ENCODE measurements at regions of chr11 and their contacts with region 1.

Region 1: DNA sequence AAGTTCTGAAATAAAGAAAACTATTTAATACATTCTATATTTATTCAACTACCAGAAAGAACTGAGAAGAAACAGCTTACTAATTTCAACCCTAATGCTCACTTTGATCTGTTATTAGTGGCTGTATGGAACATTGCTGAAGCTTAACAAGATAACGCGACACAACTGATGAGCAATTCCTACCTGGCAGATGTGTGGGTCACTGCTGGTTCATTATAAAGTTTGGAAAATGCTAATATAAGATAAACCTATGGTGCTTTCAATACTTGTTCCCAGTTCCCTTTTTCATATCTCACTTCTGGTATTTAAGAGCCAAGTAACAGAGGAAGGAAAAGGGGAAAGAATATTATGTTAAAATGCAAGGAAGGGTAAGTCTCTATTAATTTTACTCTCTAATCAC is 10.5 kb downstream of the CTSC start:
- DNase-seq: no peak
- ATAC-seq: no peak
- H3K4me3 Mint-ChIP-seq: no peak overlapping the region
- H3K27ac Mint-ChIP-seq: peak overlapping the region in 1 of 10 donors; percentile 29
- H3K4me1 Mint-ChIP-seq: peaks cover 24 to 98% (median 85%) of the 10 kb centered on the region in 4 donors
- H3K27me3 Mint-ChIP-seq: no peaks in the 10 kb centered on the region

Region 2: GRCh38 chr11:88042238-88042637 is 284.8 kb before region 1 on chr11:
- POLR2A ChIA-PET with region 1: no interaction called
- DNase-seq: no peak
- ATAC-seq: no peak
- H3K4me3 Mint-ChIP-seq: no peak overlapping the region
- H3K27ac Mint-ChIP-seq: no peak overlapping the region
- H3K4me1 Mint-ChIP-seq: no peaks in the 10 kb centered on the region
- H3K27me3 Mint-ChIP-seq: peaks cover 12 to 33% (median 15%) of the 10 kb centered on the region in 5 donors

Region 3: GRCh38 chr11:88337181-88337986 is 10.3 kb after region 1 on chr11 and contains the start of gene CTSC:
- POLR2A ChIA-PET with region 1: interaction called, 16 read pairs
- DNase-seq: peak; percentile 72 to 92 (median 88)
- ATAC-seq: peak; percentile 92 to 94
- H3K4me3 Mint-ChIP-seq: peak within 1 kb of the TSS; percentile 89 to 100 (median 99)
- H3K27ac Mint-ChIP-seq: peak within 1 kb of the TSS; percentile 92 to 99 (median 97)
- H3K4me1 Mint-ChIP-seq: peaks cover 11 to 70% (median 57%) of the 10 kb centered on the region in 4 donors
- H3K27me3 Mint-ChIP-seq: no peaks in the 10 kb centered on the region
- polyA plus RNA-seq, gene CTSC: 88.7 to 166 (median 90.3) TPM